ENCODE measurements at regions of chr7 and their contacts with region 1.

Region 1: GRCh38 chr7:76314042-76314721 is 11.7 kb downstream of the HSPB1 start:
- DNase-seq: peak; percentile 92
- H3K4me3 Mint-ChIP-seq: no peak overlapping the region
- H3K27ac Mint-ChIP-seq: no peak overlapping the region
- H3K4me1 Mint-ChIP-seq: peaks cover 28% of the 10 kb centered on the region
- H3K27me3 Mint-ChIP-seq: no peaks in the 10 kb centered on the region
- CTCF ChIP-seq: peak; percentile 100

Region 2: GRCh38 chr7:75977743-75978142 is 336.4 kb before region 1 on chr7:
- CTCF ChIA-PET with region 1: no interaction called
- POLR2A ChIA-PET with region 1: no interaction called
- intact Hi-C with region 1: no loop called
- DNase-seq: no peak
- H3K4me3 Mint-ChIP-seq: no peak overlapping the region
- H3K27ac Mint-ChIP-seq: no peak overlapping the region
- H3K4me1 Mint-ChIP-seq: no peaks in the 10 kb centered on the region
- H3K27me3 Mint-ChIP-seq: no peaks in the 10 kb centered on the region
- CTCF ChIP-seq: no peak

Region 3: DNA sequence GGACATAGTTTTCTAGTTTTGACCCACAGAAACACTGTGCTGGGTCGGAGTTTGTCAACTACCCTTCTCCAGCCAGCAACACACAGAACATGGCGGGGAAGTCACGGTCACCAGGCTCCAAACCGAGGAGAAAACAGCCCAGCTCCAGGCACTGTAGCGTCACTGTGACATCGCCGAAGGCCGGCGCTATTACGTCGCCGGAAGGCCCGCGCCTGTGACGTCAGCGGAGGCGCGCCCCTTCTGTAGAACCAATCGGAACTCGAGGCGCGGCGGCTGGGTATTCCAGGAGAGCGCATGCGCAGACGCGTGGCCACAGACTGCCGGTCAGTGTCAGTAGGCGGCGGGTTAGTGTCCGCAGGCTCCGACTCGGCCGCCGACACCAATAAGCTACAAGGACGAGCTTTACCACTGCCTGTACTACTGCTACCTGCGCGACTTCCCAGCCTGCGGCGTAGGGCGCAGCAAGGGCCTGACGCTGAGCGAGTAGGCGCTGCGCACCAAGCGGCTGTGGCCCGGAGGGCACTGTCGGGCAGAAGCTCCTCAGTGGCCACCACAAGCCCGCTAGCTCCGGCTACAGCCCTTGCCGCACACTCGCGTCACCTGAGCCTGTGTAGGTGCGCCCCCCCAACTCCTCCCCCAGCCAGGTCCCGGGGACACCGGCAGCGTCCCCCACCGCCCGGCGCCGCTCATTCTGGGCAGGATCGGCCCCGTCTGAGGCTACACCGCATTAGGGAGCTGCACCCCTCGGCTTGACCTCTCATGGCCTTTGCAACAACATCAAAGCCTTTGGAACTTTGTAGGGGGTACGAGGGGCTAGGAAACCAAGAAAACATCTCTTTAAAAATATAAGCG is 147.6 kb before region 1 on chr7:
- CTCF ChIA-PET with region 1: interaction called, 10 read pairs
- POLR2A ChIA-PET with region 1: interaction called, 4 read pairs
- intact Hi-C with region 1: no loop called
- DNase-seq: peak; percentile 95
- H3K4me3 Mint-ChIP-seq: peak overlapping the region; percentile 74
- H3K27ac Mint-ChIP-seq: peak overlapping the region; percentile 94
- H3K4me1 Mint-ChIP-seq: no peaks in the 10 kb centered on the region
- H3K27me3 Mint-ChIP-seq: no peaks in the 10 kb centered on the region
- CTCF ChIP-seq: no peak

Region 4: DNA sequence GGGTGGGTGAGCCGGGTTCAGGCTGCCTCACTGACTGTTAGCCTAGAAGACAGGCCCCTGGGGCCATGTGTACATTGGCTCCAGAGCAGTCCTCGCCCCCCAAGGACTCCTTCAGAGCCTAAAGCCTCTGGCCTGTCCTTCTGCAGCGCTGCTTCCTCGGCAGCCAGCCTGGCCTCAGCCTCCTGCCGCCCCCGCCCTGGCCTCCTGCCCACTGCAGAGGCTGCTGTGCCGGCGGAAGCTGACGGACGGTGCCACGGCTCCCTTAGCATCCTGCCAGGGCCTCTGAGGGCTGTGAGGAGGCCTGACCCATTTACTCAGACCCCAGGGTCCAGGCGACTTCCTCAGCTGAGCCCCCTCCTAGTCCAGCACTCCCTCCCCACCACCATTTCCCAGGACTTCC is 107.5 kb before region 1 on chr7:
- CTCF ChIA-PET with region 1: no interaction called
- POLR2A ChIA-PET with region 1: no interaction called
- intact Hi-C with region 1: no loop called
- DNase-seq: peak; percentile 22
- H3K4me3 Mint-ChIP-seq: no peak overlapping the region
- H3K27ac Mint-ChIP-seq: no peak overlapping the region
- H3K4me1 Mint-ChIP-seq: peaks cover 5% of the 10 kb centered on the region
- H3K27me3 Mint-ChIP-seq: peaks cover 67% of the 10 kb centered on the region
- CTCF ChIP-seq: no peak

Region 5: DNA sequence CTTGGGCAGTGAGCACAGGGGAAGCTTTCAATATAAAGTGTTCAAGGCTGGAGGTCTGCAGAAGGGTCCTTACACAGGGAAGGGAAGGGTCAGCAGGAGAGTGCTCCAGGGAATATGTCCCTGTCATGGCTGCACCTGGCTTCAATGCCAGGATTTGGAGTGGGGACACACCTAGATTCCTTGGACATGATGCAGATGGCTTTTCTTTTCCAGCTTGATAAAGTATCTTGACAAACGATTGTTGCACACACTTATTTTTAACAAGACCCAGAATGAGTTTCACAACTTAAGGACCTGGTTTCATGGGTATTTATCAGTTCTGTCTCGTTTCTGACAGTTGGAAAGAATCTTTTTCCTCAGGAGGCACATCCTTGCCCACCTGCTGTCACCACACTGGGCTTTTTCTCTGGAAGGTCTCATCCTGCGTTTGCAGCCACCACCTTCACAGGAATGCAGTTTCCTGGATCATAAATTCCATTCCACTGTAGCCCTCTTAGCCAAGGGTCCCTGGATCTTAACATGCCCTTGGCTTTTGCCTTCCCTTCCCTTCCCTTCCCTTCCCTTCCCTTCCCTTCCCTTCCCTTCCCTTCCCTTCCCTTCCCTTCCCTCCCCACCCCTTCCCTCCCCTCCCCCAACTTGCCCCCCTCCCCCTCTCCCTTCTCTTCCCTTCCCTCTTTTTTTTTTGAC is 90.8 kb before region 1 on chr7:
- CTCF ChIA-PET with region 1: interaction called, 13 read pairs
- POLR2A ChIA-PET with region 1: no interaction called
- intact Hi-C with region 1: no loop called
- DNase-seq: no peak
- H3K4me3 Mint-ChIP-seq: no peak overlapping the region
- H3K27ac Mint-ChIP-seq: no peak overlapping the region
- H3K4me1 Mint-ChIP-seq: no peaks in the 10 kb centered on the region
- H3K27me3 Mint-ChIP-seq: peaks cover 22% of the 10 kb centered on the region
- CTCF ChIP-seq: no peak

Region 6: DNA sequence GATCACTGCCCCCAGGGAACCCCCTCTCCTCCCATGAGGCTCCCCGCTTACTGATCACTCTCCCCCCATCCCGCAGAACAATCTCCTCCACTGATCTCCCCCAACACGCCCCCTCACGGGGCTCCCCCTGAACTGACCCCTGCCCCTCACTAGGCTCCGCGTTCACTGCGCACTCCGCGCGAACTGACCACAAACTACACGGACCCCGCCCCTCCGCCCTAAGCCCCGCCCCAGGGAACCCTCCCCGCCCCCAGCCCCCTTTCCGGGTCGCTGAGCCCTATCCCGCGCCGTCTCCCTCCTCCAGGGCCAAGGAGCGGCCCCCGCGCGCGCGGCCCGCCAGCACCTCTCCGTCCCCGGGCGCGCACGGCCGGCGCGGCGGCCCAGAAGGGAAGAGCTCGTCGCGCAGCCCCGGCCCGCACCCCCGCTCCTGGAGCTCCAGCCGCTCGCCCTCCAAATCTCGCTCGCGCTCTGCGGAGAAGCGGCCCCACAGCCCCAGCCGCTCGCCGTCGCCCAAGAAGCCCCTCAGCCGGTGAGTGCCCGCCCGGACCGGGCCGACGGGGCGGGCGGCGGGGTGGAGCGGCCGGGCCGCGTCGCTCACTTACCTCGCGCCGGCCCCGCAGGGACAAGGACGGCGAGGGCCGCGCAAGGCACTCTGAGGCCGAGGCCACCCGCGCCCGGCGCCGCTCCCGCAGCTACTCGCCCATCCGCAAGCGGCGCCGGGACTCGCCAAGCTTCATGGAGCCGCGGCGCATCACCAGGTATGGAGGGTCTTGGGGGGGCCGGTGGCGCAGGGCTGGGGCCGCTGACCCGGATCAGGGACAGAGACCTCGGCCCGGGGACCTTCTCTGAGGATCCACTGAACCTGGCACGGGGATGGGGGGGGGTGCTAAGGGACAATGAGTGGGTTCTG is 31.6 kb before region 1 on chr7:
- CTCF ChIA-PET with region 1: interaction called, 17 read pairs
- POLR2A ChIA-PET with region 1: interaction called, 7 read pairs
- intact Hi-C with region 1: no loop called
- DNase-seq: no peak
- H3K4me3 Mint-ChIP-seq: peak overlapping the region; percentile 70
- H3K27ac Mint-ChIP-seq: peak overlapping the region; percentile 70
- H3K4me1 Mint-ChIP-seq: peaks cover 14% of the 10 kb centered on the region
- H3K27me3 Mint-ChIP-seq: peaks cover 34% of the 10 kb centered on the region
- CTCF ChIP-seq: no peak

Region 7: GRCh38 chr7:76297387-76297756 is 16.8 kb before region 1 on chr7:
- CTCF ChIA-PET with region 1: interaction called, 232 read pairs
- POLR2A ChIA-PET with region 1: interaction called, 283 read pairs
- intact Hi-C with region 1: no loop called
- DNase-seq: peak; percentile 98
- H3K4me3 Mint-ChIP-seq: peak overlapping the region; percentile 53
- H3K27ac Mint-ChIP-seq: peak overlapping the region; percentile 87
- H3K4me1 Mint-ChIP-seq: peaks cover 46% of the 10 kb centered on the region
- H3K27me3 Mint-ChIP-seq: no peaks in the 10 kb centered on the region
- CTCF ChIP-seq: no peak

Region 8: DNA sequence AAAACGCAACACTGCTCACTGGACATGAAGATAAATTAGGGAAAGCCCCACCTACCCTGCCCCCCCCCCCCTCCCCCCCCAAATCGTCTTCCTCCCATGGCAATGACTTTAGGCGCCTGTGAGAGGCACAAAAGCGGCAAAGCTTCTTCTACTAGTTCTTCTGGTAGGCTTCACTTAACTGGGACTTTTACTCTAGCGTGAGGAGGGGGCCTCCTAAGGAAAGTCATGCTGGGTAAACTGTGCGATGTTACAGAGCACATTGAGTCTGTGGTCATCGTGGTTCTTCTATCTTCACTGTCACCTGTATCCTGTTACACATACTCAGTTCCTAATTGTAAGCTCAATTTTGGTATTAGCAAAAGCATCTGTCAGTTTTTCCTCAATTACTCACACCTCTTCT is 13.4 kb after region 1 on chr7:
- CTCF ChIA-PET with region 1: interaction called, 4 read pairs
- POLR2A ChIA-PET with region 1: interaction called, 15 read pairs
- intact Hi-C with region 1: no loop called
- DNase-seq: no peak
- H3K4me3 Mint-ChIP-seq: no peak overlapping the region
- H3K27ac Mint-ChIP-seq: no peak overlapping the region
- H3K4me1 Mint-ChIP-seq: peaks cover 8% of the 10 kb centered on the region
- H3K27me3 Mint-ChIP-seq: no peaks in the 10 kb centered on the region
- CTCF ChIP-seq: no peak

Region 9: GRCh38 chr7:76359111-76359978 is 45.2 kb after region 1 on chr7:
- CTCF ChIA-PET with region 1: interaction called, 21 read pairs
- POLR2A ChIA-PET with region 1: interaction called, 130 read pairs
- intact Hi-C with region 1: loop called (anchors 1 kb)
- DNase-seq: peak; percentile 98
- H3K4me3 Mint-ChIP-seq: peak overlapping the region; percentile 89
- H3K27ac Mint-ChIP-seq: peak overlapping the region; percentile 97
- H3K4me1 Mint-ChIP-seq: peaks cover 27% of the 10 kb centered on the region
- H3K27me3 Mint-ChIP-seq: no peaks in the 10 kb centered on the region
- CTCF ChIP-seq: peak; percentile 70

Measured in MCF 10A (cell line).